ENCODE measurements at regions of chr15 and their contacts with region 1.

Region 1: GRCh38 chr15:92709110-92709790 is 53.7 kb upstream of the FAM174B start:
- DNase-seq: no peak
- CTCF ChIP-seq: no peak

Region 2: DNA sequence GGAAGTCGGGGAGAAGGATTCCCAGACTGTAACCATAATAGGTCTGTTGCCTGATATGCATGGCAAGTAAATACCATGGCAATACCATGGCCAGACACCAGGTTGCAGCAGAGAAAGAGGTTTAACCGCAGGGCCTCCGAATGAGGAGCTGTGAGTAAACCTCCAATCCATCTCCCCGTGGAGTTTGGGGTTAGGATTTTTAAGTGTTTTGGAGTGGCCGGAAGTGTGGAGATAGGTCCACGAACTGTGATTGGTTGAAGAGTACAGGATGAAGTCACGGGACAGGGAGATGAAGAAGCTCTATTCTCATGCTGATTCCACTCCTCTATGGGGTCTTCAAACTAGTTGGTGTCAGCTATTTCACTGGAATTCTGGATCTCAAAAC is 187.6 kb before region 1 on chr15:
- in situ Hi-C with region 1: loop called (anchors 10 kb)
- DNase-seq: peak; percentile 62
- CTCF ChIP-seq: peak; percentile 65

Measured in GM13977 (cell line).